ENCODE measurements at regions of chr19 and their contacts with region 1.

Region 1: DNA sequence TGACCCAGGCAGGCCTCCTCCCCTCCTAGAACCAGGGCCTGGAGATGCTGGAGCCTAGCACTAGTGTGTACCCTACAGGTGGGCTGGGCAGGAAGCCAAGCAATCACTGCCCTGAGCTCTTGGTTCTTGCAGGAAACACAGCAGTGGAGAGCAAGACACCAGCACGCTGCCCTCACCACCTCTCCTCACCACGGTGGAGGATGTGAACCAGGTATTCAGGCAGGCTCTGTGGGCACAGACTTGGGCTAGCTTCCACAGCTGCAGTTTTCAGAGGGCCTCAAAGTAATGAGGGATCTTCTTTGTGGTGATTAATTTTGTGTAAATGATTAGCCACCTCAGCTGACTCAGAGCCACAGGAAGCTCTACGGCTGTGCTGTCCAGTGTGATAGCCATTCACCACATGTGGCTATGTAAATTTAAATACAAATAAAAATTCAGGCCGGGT is 13.6 kb upstream of the GPI start:
- DNase-seq: peak in 1 of 5 donors; percentile 43
- H3K4me3 ChIP-seq: no peak overlapping the region
- H3K4me3 Mint-ChIP-seq: peak overlapping the region in 5 of 8 donors; percentile 29 to 58 (median 46)
- H3K27ac ChIP-seq: peak overlapping the region; percentile 26
- H3K27ac Mint-ChIP-seq: peak overlapping the region; percentile 47 to 86 (median 73)
- H3K4me1 ChIP-seq: peaks cover 35% of the 10 kb centered on the region
- H3K4me1 Mint-ChIP-seq: peaks cover 14 to 38% (median 20%) of the 10 kb centered on the region in 4 donors
- H3K27me3 ChIP-seq: no peaks in the 10 kb centered on the region
- H3K27me3 Mint-ChIP-seq: no peaks in the 10 kb centered on the region

Region 2: DNA sequence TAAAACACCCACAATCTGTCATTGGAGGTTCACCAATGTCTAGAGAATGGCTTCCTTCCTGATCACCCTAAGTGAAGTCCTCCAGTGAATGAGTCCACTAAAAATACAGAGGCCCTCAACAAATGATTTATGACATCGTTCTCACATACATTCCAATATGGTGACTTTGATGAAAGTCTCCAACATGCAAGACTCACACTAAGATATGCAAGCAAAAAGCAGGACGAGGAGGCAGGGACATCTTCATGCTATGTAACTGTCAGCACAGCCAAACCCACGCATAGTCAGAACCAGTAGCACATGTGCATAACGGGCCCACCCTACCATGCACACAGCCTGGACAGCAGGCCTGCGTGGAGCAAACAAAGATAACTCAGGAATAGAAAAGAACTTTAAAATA is 195.7 kb before region 1 on chr19:
- CTCF ChIA-PET with region 1: no interaction called
- POLR2A ChIA-PET with region 1: no interaction called
- intact Hi-C with region 1: no loop called
- DNase-seq: no peak
- H3K4me3 ChIP-seq: no peak overlapping the region
- H3K4me3 Mint-ChIP-seq: no peak overlapping the region
- H3K27ac ChIP-seq: no peak overlapping the region
- H3K27ac Mint-ChIP-seq: peak overlapping the region in 1 of 7 donors; percentile 56
- H3K4me1 ChIP-seq: no peaks in the 10 kb centered on the region
- H3K4me1 Mint-ChIP-seq: no peaks in the 10 kb centered on the region
- H3K27me3 ChIP-seq: no peaks in the 10 kb centered on the region
- H3K27me3 Mint-ChIP-seq: peaks cover 2 to 7% of the 10 kb centered on the region in 2 donors

Region 3: GRCh38 chr19:34282611-34283519 is 68.5 kb before region 1 on chr19:
- CTCF ChIA-PET with region 1: no interaction called
- POLR2A ChIA-PET with region 1: no interaction called
- intact Hi-C with region 1: no loop called
- DNase-seq: no peak
- H3K4me3 ChIP-seq: no peak overlapping the region
- H3K4me3 Mint-ChIP-seq: peak overlapping the region in 1 of 8 donors; percentile 61
- H3K27ac ChIP-seq: no peak overlapping the region
- H3K27ac Mint-ChIP-seq: peak overlapping the region in 4 of 7 donors; percentile 9 to 65 (median 50)
- H3K4me1 ChIP-seq: peaks cover 9% of the 10 kb centered on the region
- H3K4me1 Mint-ChIP-seq: peaks cover 17 to 49% (median 23%) of the 10 kb centered on the region in 4 donors
- H3K27me3 ChIP-seq: no peaks in the 10 kb centered on the region
- H3K27me3 Mint-ChIP-seq: no peaks in the 10 kb centered on the region

Region 4: GRCh38 chr19:34336781-34337271 is 14.6 kb before region 1 on chr19:
- CTCF ChIA-PET with region 1: interaction called, 18 read pairs
- POLR2A ChIA-PET with region 1: interaction called, 3 read pairs
- intact Hi-C with region 1: loop called (anchors 2 kb)
- DNase-seq: peak; percentile 54 to 58 (median 56)
- H3K4me3 ChIP-seq: no peak overlapping the region
- H3K4me3 Mint-ChIP-seq: no peak overlapping the region
- H3K27ac ChIP-seq: no peak overlapping the region
- H3K27ac Mint-ChIP-seq: peak overlapping the region in 6 of 7 donors; percentile 10 to 80 (median 64)
- H3K4me1 ChIP-seq: peaks cover 11% of the 10 kb centered on the region
- H3K4me1 Mint-ChIP-seq: peaks cover 4 to 10% (median 8%) of the 10 kb centered on the region in 4 donors
- H3K27me3 ChIP-seq: no peaks in the 10 kb centered on the region
- H3K27me3 Mint-ChIP-seq: no peaks in the 10 kb centered on the region

Region 5: GRCh38 chr19:34364830-34365462 is 13.5 kb after region 1 on chr19 and contains the start of gene GPI:
- CTCF ChIA-PET with region 1: interaction called, 15 read pairs
- POLR2A ChIA-PET with region 1: interaction called, 14 read pairs
- intact Hi-C with region 1: loop called (anchors 2 kb)
- DNase-seq: peak; percentile 59 to 68 (median 61)
- H3K4me3 ChIP-seq: peak within 1 kb of the TSS; percentile 76
- H3K4me3 Mint-ChIP-seq: peak within 1 kb of the TSS; percentile 91 to 99 (median 98)
- H3K27ac ChIP-seq: peak within 1 kb of the TSS; percentile 62
- H3K27ac Mint-ChIP-seq: peak within 1 kb of the TSS; percentile 83 to 95 (median 90)
- H3K4me1 ChIP-seq: peaks cover 38% of the 10 kb centered on the region
- H3K4me1 Mint-ChIP-seq: peaks cover 24 to 45% (median 34%) of the 10 kb centered on the region in 4 donors
- H3K27me3 ChIP-seq: no peaks in the 10 kb centered on the region
- H3K27me3 Mint-ChIP-seq: no peaks in the 10 kb centered on the region
- total RNA-seq, gene GPI: 121 to 127 TPM

Region 6: GRCh38 chr19:34404109-34404897 is 52.9 kb after region 1 on chr19 and contains the start of gene PDCD2L:
- CTCF ChIA-PET with region 1: no interaction called
- POLR2A ChIA-PET with region 1: no interaction called
- intact Hi-C with region 1: loop called (anchors 2 kb)
- DNase-seq: peak; percentile 87 to 93 (median 89)
- H3K4me3 ChIP-seq: peak within 1 kb of the TSS; percentile 78 to 100
- H3K4me3 Mint-ChIP-seq: peak within 1 kb of the TSS; percentile 88 to 94 (median 92)
- H3K27ac ChIP-seq: peak within 1 kb of the TSS; percentile 74
- H3K27ac Mint-ChIP-seq: peak within 1 kb of the TSS; percentile 82 to 93 (median 85)
- H3K4me1 ChIP-seq: peaks cover 16% of the 10 kb centered on the region
- H3K4me1 Mint-ChIP-seq: peaks cover 4 to 27% (median 17%) of the 10 kb centered on the region in 4 donors
- H3K27me3 ChIP-seq: no peaks in the 10 kb centered on the region
- H3K27me3 Mint-ChIP-seq: no peaks in the 10 kb centered on the region
- total RNA-seq, gene PDCD2L: 8.8 to 12.3 TPM

Region 7: DNA sequence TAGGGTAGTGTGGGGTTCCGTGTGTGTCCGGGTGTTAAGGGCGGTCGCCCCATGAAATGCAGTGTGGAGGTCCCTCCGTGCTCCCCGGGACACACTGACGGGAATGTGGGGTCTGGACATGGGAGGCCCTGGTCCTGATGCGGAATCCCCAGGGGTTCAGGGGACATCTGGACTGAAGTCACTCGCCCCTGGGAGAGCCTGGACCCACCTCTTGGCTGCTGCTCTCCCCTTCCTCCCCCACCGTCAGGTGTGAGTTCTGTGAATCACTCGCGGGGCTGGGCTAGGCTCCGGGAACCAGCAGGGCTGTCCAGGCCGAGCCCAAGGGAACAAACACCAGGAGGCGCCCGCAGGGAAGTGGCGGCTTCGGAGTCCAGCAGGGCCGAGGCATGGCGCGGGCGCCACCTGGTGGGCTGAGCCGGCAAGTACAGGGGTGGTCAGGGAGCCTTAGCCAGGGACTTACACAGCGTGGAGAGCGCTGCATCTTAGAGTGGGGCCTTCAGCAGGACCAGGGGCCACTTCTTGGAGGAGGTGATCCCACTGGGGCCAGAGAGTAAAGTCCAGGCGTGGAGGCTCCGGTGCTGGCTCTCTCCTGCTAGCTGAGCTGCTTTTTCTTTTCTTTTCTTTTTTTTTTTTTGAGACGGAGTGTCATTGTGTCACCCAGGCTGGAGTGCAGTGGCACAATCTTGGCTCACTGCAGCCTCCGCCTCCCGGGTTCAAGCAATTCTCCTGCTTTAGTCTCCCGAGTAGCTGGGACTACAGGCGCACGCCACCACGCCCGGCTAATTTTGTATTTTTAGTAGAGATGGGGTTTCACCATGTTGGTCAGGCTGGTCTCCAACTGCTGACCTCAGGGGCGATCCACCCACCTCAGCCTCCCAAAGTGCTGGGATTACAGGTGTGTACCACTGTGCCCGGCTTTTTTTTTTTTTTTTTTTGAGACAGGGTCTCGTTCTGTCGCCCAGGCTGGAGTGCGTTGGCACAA is 150.2 kb after region 1 on chr19:
- CTCF ChIA-PET with region 1: no interaction called
- POLR2A ChIA-PET with region 1: no interaction called
- intact Hi-C with region 1: no loop called
- DNase-seq: peak; percentile 75 to 81 (median 77)
- H3K4me3 ChIP-seq: no peak overlapping the region
- H3K4me3 Mint-ChIP-seq: peak overlapping the region in 2 of 8 donors; percentile 34 to 54
- H3K27ac ChIP-seq: no peak overlapping the region
- H3K27ac Mint-ChIP-seq: peak overlapping the region in 1 of 7 donors; percentile 19
- H3K4me1 ChIP-seq: peaks cover 12% of the 10 kb centered on the region
- H3K4me1 Mint-ChIP-seq: peaks cover 1 to 20% (median 8%) of the 10 kb centered on the region in 4 donors
- H3K27me3 ChIP-seq: no peaks in the 10 kb centered on the region
- H3K27me3 Mint-ChIP-seq: peaks cover 2 to 14% of the 10 kb centered on the region in 2 donors